Activated CD4-positive, alpha-beta T cell treated with anti-CD3 and anti-CD28 coated beads for 36 hours (primary cell): ENCODE measurements at regions of chr1 and their contacts with region 1.

Region 1: GRCh38 chr1:92968138-92969032 is 7.1 kb upstream of the DIPK1A start:
- DNase-seq: peak; percentile 32
- ATAC-seq: peak; percentile 70
- H3K4me3 Mint-ChIP-seq: no peak overlapping the region
- H3K27ac Mint-ChIP-seq: no peak overlapping the region
- H3K4me1 Mint-ChIP-seq: peaks cover 31% of the 10 kb centered on the region
- H3K27me3 Mint-ChIP-seq: no peaks in the 10 kb centered on the region

Region 2: DNA sequence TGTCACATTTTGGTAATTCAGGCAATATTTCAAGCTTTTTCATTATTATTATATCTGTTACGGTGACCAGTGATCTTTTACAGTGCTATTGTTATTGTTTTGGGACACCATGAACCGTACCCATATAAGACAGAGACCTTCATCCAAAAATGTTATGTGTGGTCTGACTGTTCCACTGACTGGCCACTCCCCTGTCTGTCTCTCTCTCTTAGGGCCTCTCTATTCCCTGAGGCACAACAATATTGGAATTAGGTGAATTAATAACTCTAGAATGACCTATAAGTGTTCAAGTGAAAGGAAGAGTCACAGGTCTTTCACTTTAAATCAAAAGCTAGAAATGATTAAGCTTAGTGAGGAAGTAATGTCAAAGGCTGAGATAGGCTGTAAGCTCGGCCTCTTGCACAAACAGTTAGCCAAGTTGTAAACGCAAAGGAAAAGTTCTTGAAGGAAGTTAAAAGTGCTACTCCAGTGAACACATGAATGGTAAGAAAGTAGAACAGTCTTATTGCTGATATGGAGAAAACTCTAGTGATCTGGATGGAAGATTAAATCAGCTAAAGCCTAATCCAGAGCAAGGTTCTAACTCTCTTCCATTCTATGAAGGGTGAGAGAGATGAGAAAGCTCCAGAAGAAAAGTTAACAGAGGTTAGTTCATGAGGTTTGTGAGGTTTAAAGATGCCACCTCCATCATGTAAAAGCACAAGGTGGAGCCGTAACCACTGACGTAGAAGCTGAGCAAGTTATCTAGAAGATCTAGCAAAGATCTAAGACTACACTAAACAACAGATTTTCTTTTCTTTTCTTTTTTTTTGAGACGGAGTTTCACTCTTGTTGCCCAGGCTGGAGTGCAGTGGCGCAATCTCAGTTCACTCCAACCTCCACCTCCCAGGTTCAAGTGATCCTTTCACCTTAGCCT is 12.6 kb after region 1 on chr1:
- CTCF ChIA-PET with region 1: interaction called, 34 read pairs
- POLR2A ChIA-PET with region 1: interaction called, 6 read pairs
- intact Hi-C with region 1: loop called in 1 of 2 experiments (anchors 1 kb)
- DNase-seq: peak; percentile 46
- ATAC-seq: peak; percentile 73
- H3K4me3 Mint-ChIP-seq: peak overlapping the region; percentile 47
- H3K27ac Mint-ChIP-seq: peak overlapping the region; percentile 97
- H3K4me1 Mint-ChIP-seq: peaks cover 54% of the 10 kb centered on the region
- H3K27me3 Mint-ChIP-seq: no peaks in the 10 kb centered on the region

Region 3: GRCh38 chr1:93000751-93001175 is 32.4 kb after region 1 on chr1:
- CTCF ChIA-PET with region 1: interaction called, 10 read pairs
- POLR2A ChIA-PET with region 1: no interaction called
- intact Hi-C with region 1: no loop called
- DNase-seq: no peak
- ATAC-seq: no peak
- H3K4me3 Mint-ChIP-seq: no peak overlapping the region
- H3K27ac Mint-ChIP-seq: no peak overlapping the region
- H3K4me1 Mint-ChIP-seq: peaks cover 10% of the 10 kb centered on the region
- H3K27me3 Mint-ChIP-seq: peaks cover 6% of the 10 kb centered on the region